GM23248 (cell line): ENCODE measurements at regions of chr9 and their contacts with region 1.

Region 1: GRCh38 chr9:131762356-131762932 is 22.6 kb upstream of the RAPGEF1 start:
- DNase-seq: peak; percentile 86
- H3K4me3 ChIP-seq: no peak overlapping the region
- H3K27ac ChIP-seq: no peak overlapping the region
- H3K4me1 ChIP-seq: no peaks in the 10 kb centered on the region
- H3K27me3 ChIP-seq: peaks cover 49% of the 10 kb centered on the region

Region 2: GRCh38 chr9:132250324-132251262 is 488.1 kb after region 1 on chr9:
- in situ Hi-C with region 1: loop called (anchors 5 kb)
- DNase-seq: no peak
- H3K4me3 ChIP-seq: no peak overlapping the region
- H3K27ac ChIP-seq: no peak overlapping the region
- H3K4me1 ChIP-seq: no peaks in the 10 kb centered on the region
- H3K27me3 ChIP-seq: peaks cover 9% of the 10 kb centered on the region

Region 3: GRCh38 chr9:133008824-133009223 is 1246.4 kb after region 1 on chr9:
- in situ Hi-C with region 1: no loop called
- DNase-seq: no peak
- H3K4me3 ChIP-seq: no peak overlapping the region
- H3K27ac ChIP-seq: no peak overlapping the region
- H3K4me1 ChIP-seq: no peaks in the 10 kb centered on the region
- H3K27me3 ChIP-seq: peaks cover 4% of the 10 kb centered on the region; the same call in 1 of the 2 replicates